CD4-positive, alpha-beta memory T cell (primary cell): ENCODE measurements at regions of chr11 and their contacts with region 1.

Region 1: DNA sequence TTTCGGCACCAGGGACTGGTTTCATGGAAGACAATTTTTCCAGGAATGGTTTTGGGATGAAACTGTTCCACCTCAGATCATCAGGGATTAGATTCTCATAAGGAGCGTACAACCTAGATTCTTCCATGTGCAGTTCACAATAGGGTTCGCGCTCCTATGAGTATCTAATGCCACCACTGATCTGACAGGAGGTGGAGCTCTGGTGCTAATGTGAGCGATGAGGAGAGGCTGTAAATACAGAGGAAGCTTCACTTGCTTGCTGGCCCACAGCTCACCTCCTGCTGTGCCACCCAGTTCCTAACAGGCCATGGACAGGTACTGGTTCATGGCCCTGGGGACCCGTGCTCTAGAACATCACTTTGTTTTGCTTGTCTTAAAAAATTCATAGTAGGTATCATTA is 41.8 kb upstream of the AMPD3 start:
- DNase-seq: peak in 4 of 5 donors; percentile 44 to 56 (median 50)
- H3K4me3 ChIP-seq: no peak overlapping the region
- H3K4me3 Mint-ChIP-seq: peak overlapping the region in 1 of 8 donors; percentile 49
- H3K27ac ChIP-seq: no peak overlapping the region
- H3K27ac Mint-ChIP-seq: no peak overlapping the region
- H3K4me1 ChIP-seq: peaks cover 39% of the 10 kb centered on the region
- H3K4me1 Mint-ChIP-seq: peaks cover 36 to 53% (median 39%) of the 10 kb centered on the region in 4 donors
- H3K27me3 ChIP-seq: no peaks in the 10 kb centered on the region
- H3K27me3 Mint-ChIP-seq: no peaks in the 10 kb centered on the region

Region 2: DNA sequence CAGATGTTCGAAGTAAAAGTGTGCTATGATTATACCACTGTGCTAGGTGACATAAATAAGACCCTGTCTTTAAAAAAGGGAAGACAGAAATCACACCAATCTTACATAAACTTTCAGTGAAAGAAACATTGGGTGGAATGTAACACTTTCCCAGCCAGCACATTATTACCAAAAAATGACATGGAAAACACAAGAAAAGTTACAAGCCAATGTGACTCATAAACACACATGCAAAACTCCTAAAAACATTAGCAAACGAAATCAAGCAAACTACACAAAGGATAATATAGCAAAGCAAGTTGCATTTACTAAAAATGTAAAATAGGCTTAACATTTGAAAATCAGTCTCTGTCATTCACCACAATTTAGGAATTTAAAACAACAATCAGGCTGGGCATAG is 166.3 kb before region 1 on chr11:
- CTCF ChIA-PET with region 1: no interaction called
- POLR2A ChIA-PET with region 1: no interaction called
- intact Hi-C with region 1: no loop called
- DNase-seq: no peak
- H3K4me3 ChIP-seq: no peak overlapping the region
- H3K4me3 Mint-ChIP-seq: no peak overlapping the region
- H3K27ac ChIP-seq: no peak overlapping the region
- H3K27ac Mint-ChIP-seq: no peak overlapping the region
- H3K4me1 ChIP-seq: no peaks in the 10 kb centered on the region
- H3K4me1 Mint-ChIP-seq: peaks cover 0 to 4% (median 0%) of the 10 kb centered on the region in 4 donors
- H3K27me3 ChIP-seq: no peaks in the 10 kb centered on the region
- H3K27me3 Mint-ChIP-seq: no peaks in the 10 kb centered on the region

Region 3: DNA sequence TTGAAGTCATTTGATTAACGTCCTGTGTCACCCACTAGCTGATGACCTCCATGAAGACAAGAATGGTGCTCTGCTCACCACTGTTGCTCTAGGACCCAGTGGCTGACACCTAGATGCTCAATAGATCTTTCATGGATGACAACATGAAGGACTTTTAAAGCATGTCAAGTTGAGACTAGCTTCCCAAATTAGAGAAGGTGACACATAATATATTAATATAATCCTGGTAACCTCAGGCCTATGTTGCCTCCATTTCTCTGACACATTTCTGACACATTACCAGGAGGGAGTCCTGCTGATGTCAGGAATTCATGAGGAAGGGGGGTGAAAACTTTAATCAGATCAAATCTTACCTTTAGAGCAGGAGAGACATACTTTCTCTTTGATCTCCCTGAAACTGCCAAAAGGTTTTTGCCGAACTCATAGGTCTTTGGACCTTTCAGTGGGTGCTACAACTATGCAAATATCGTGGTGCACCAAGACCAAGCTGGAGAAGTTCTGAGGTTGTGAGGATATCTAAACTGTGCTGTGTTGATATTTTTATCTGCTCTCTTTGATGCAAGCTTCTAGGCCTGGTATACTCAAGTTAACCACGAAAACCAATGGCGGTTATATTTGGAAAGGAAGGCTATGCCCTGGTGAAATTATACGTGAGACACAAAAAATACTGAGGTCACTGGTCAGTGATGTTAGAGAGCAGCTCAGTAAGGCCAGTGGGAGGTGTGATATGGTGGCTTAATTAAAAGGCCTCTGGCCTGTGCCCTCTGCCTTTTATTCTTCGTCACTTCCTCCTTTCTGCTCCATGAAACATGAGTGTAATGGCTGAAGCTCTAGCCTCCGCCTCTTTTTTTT is 28.6 kb after region 1 on chr11:
- CTCF ChIA-PET with region 1: interaction called, 10 read pairs
- POLR2A ChIA-PET with region 1: interaction called, 3 read pairs
- intact Hi-C with region 1: no loop called
- DNase-seq: peak in 3 of 5 donors; percentile 10 to 56 (median 28)
- H3K4me3 ChIP-seq: no peak overlapping the region
- H3K4me3 Mint-ChIP-seq: peak overlapping the region in 3 of 8 donors; percentile 25 to 57 (median 27)
- H3K27ac ChIP-seq: no peak overlapping the region
- H3K27ac Mint-ChIP-seq: peak overlapping the region; percentile 26 to 86 (median 73)
- H3K4me1 ChIP-seq: peaks cover 10% of the 10 kb centered on the region
- H3K4me1 Mint-ChIP-seq: peaks cover 13 to 40% (median 17%) of the 10 kb centered on the region in 4 donors
- H3K27me3 ChIP-seq: no peaks in the 10 kb centered on the region
- H3K27me3 Mint-ChIP-seq: no peaks in the 10 kb centered on the region

Region 4: GRCh38 chr11:10455637-10456487 is 42.6 kb after region 1 on chr11:
- CTCF ChIA-PET with region 1: interaction called, 26 read pairs
- POLR2A ChIA-PET with region 1: interaction called, 14 read pairs
- intact Hi-C with region 1: loop called (anchors 1 kb)
- DNase-seq: peak; percentile 70 to 91 (median 75)
- H3K4me3 ChIP-seq: peak overlapping the region; percentile 53 to 85
- H3K4me3 Mint-ChIP-seq: peak overlapping the region; percentile 90 to 96 (median 93)
- H3K27ac ChIP-seq: peak overlapping the region; percentile 75
- H3K27ac Mint-ChIP-seq: peak overlapping the region; percentile 94 to 97 (median 95)
- H3K4me1 ChIP-seq: peaks cover 84% of the 10 kb centered on the region
- H3K4me1 Mint-ChIP-seq: peaks cover 59 to 97% (median 79%) of the 10 kb centered on the region in 4 donors
- H3K27me3 ChIP-seq: no peaks in the 10 kb centered on the region
- H3K27me3 Mint-ChIP-seq: no peaks in the 10 kb centered on the region

Region 5: DNA sequence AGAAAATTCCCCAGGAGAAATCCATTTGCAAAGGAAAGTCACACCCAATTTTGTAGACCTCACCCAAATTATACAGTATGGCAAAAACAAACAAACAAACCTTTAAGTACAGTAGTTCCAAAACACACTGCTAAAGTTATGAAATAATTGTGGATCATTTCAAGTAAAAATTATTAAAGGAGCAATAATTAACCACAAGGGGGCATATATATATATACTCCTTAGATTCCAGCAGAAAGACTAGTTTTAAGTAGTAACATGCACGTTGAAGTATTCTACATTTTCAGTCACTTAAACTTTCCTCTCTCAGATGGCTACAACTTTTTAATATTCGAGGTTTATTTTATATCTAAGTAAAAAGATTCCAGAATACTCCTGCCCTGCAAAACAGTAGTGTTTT is 100.9 kb after region 1 on chr11:
- CTCF ChIA-PET with region 1: interaction called, 20 read pairs
- POLR2A ChIA-PET with region 1: no interaction called
- intact Hi-C with region 1: loop called (anchors 10 kb)
- DNase-seq: no peak
- H3K4me3 ChIP-seq: no peak overlapping the region
- H3K4me3 Mint-ChIP-seq: no peak overlapping the region
- H3K27ac ChIP-seq: no peak overlapping the region
- H3K27ac Mint-ChIP-seq: peak overlapping the region in 3 of 7 donors; percentile 8 to 89 (median 9)
- H3K4me1 ChIP-seq: no peaks in the 10 kb centered on the region
- H3K4me1 Mint-ChIP-seq: peaks cover 0 to 2% (median under 1%) of the 10 kb centered on the region in 4 donors
- H3K27me3 ChIP-seq: no peaks in the 10 kb centered on the region
- H3K27me3 Mint-ChIP-seq: no peaks in the 10 kb centered on the region

Region 6: GRCh38 chr11:10653926-10654810 is 240.9 kb after region 1 on chr11:
- CTCF ChIA-PET with region 1: interaction called, 260 read pairs
- POLR2A ChIA-PET with region 1: interaction called, 9 read pairs
- intact Hi-C with region 1: loop called (anchors 1 kb)
- DNase-seq: peak in 4 of 5 donors; percentile 47 to 53 (median 50)
- H3K4me3 ChIP-seq: no peak overlapping the region
- H3K4me3 Mint-ChIP-seq: no peak overlapping the region
- H3K27ac ChIP-seq: no peak overlapping the region
- H3K27ac Mint-ChIP-seq: peak overlapping the region in 2 of 7 donors; percentile 16 to 41
- H3K4me1 ChIP-seq: no peaks in the 10 kb centered on the region
- H3K4me1 Mint-ChIP-seq: peaks cover 0 to 2% (median under 1%) of the 10 kb centered on the region in 4 donors
- H3K27me3 ChIP-seq: no peaks in the 10 kb centered on the region
- H3K27me3 Mint-ChIP-seq: no peaks in the 10 kb centered on the region

Region 7: DNA sequence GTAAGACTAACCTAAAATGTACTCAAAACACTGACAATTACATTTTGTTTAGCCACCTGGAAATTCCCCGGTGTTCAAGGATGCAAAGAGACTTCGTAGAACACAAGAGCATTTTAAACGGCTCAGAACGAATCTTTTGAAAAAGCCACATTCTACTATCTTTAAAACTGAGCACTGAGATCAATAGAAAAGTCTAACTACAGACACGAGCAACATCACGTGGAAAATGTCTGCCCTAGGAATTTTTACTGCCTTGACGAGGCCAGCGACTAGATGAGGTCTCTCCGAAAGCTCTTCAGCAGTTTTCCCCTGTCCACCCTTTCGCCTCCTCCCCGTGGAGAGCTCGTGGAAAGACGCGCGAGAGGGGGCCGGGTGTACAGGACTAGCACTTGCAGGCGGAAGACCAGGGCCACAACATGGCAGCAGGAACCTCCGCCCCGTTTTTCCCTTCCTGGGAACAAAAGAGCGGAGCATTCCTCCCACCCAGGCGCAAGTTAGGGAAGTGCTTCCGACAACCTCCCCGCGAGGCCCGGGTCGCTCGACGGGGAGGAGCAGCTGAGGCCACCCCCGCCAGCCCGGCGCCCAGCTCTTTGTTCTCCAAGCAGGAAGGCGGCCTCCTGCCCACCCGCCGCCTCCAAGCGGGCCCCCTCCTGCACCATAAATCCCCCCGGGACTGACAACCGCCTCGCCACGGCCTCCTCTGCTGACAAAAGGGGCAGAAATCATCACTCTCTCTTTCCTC is 394.4 kb after region 1 on chr11:
- CTCF ChIA-PET with region 1: no interaction called
- POLR2A ChIA-PET with region 1: no interaction called
- intact Hi-C with region 1: no loop called
- DNase-seq: peak; percentile 43 to 61 (median 50)
- H3K4me3 ChIP-seq: peak overlapping the region; percentile 77 to 95
- H3K4me3 Mint-ChIP-seq: peak overlapping the region; percentile 94 to 99 (median 97)
- H3K27ac ChIP-seq: peak overlapping the region; percentile 97
- H3K27ac Mint-ChIP-seq: peak overlapping the region; percentile 92 to 100 (median 98)
- H3K4me1 ChIP-seq: peaks cover 55% of the 10 kb centered on the region
- H3K4me1 Mint-ChIP-seq: peaks cover 31 to 69% (median 47%) of the 10 kb centered on the region in 4 donors
- H3K27me3 ChIP-seq: no peaks in the 10 kb centered on the region
- H3K27me3 Mint-ChIP-seq: peaks cover 0 to 3% of the 10 kb centered on the region in 2 donors